ENCODE measurements at regions of chr2 and their contacts with region 1.

Region 1: GRCh38 chr2:84946204-84947009 is 24.6 kb upstream of the KCMF1 start:
- DNase-seq: peak; percentile 61
- H3K4me3 ChIP-seq: no peak overlapping the region
- H3K27ac ChIP-seq: peak overlapping the region; percentile 81
- H3K4me1 ChIP-seq: peaks cover 11% of the 10 kb centered on the region
- H3K27me3 ChIP-seq: no peaks in the 10 kb centered on the region
- CTCF ChIP-seq: no peak
- POLR2A ChIP-seq: peak; percentile 33

Region 2: DNA sequence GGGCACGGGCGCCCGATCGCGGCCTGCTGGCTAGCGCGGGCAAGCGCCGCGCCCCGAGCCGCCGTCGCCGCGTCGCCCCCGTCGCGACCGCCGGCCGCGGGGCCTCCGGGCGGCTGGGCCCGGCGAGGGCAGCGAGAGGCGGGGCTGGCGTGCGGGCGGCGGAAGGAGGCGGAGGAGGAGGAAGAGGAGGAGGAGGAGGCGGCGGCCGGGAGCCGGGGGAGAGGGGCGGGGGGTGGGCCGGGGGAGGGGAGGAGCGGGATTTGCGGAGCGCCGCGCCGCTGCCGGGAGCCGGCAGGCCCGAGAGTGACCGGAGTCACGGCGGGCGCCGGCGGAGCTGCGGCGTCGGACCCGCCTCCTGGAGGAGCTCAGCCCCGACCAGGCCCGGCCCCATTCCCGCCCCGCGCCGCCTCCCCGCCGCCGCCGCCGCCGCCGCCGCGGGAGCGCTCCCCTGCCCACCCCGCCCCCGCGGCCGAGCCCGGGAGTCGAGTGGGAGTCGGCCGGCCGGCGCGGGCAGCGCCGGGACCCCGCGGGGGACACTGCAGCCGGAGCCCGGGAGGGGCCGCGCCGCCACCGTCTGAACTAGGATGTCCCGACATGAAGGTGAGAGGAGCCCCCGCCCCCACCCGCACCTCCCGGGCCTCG is 24.6 kb after region 1 on chr2 and contains the start of gene KCMF1:
- CTCF ChIA-PET with region 1: interaction called, 5 read pairs
- POLR2A ChIA-PET with region 1: no interaction called
- dilution Hi-C with region 1: no loop called
- intact Hi-C with region 1: loop called (anchors 2 kb)
- DNase-seq: peak; percentile 30
- H3K4me3 ChIP-seq: peak within 1 kb of the TSS; percentile 92 to 98 (median 97)
- H3K27ac ChIP-seq: peak within 1 kb of the TSS; percentile 96
- H3K4me1 ChIP-seq: peaks cover 18% of the 10 kb centered on the region
- H3K27me3 ChIP-seq: no peaks in the 10 kb centered on the region
- CTCF ChIP-seq: no peak
- POLR2A ChIP-seq: no peak
- total RNA-seq, gene KCMF1: 75.9 and 78.4 TPM in 2 replicates

Measured in endothelial cell of umbilical vein (primary cell).